GM12878 (cell line): ENCODE measurements at regions of chr10 and their contacts with region 1.

Region 1: DNA sequence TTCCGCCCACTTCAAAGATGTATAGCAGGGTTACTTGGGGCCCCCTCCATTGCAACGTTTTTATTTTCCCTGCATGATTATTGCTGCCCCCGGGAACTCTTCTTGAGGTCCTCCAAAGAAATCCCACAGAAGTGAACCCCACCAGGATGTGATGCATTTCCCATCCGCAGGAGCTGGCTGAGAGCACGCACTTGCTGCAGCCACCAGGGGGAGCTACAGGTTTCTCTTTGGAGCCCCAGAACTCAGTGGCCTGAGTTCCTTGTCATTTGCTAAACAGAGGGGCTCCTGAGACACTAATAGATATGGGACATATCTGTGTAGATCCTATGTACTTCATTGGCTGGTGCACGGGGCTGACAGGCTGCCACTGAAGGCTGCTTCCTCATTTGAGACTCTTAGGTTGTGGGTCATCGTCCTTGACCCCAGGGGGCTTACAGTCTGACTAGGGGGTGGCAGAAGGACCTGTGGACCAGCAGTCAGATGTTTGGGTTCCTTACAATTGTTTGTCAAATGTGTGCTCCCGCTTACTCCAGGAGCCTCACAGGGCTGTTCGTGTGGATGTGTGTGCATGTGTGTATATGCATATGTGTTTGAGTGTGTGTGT is 52.3 kb upstream of the ENO4 start:
- DNase-seq: no peak
- ATAC-seq: peak; percentile 95
- H3K4me3 ChIP-seq: no peak overlapping the region
- H3K27ac ChIP-seq: no peak overlapping the region
- H3K4me1 ChIP-seq: no peaks in the 10 kb centered on the region
- H3K27me3 ChIP-seq: no peaks in the 10 kb centered on the region
- CTCF ChIP-seq: peak; percentile 87 to 93 (median 90)
- EP300 ChIP-seq: no peak
- POLR2A ChIP-seq: no peak
- RAD21 ChIP-seq: peak; percentile 95

Region 2: DNA sequence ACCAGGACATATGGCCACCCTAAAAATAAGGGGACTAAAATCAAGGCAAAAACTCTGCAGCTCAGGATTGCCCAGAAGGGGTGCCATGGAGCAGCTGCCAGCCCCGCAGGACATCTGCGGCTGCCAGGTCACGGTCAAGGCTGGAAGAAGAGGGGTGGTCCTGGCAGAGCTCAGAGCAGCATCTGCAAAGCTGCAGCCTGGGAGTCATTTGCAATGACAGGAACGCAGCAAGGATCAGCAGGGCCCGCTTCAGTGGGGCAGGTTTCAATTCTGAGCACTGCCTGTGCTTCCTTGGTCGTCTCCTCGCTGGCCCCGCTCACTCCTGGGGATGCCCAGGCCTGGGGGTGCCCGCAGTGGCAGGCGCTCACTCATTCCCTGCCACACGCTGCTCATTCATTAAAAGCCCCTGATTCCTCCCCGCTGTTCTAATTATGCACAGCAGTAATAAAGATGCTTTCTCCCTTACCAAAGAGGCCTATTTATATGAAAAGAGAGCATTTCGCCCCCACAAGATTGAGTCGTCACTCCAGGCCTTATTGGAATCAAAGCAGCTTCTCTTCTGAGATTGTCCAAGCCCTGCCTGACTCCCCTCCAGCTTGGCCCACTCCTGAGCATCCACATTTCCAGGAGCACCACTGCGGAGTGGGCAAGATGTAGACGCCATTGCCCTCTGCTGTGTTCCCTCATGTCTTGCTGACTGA is 59.2 kb before region 1 on chr10:
- CTCF ChIA-PET with region 1: no interaction called
- POLR2A ChIA-PET with region 1: no interaction called
- RAD21 ChIA-PET with region 1: no interaction called
- SMC1A ChIA-PET with region 1: no interaction called
- in situ Hi-C with region 1: no loop called
- intact Hi-C with region 1: no loop called
- DNase-seq: no peak
- ATAC-seq: no peak
- H3K4me3 ChIP-seq: no peak overlapping the region
- H3K27ac ChIP-seq: no peak overlapping the region
- H3K4me1 ChIP-seq: no peaks in the 10 kb centered on the region
- H3K27me3 ChIP-seq: peaks cover 2 to 4% of the 10 kb centered on the region in 2 experiments; a peak in 3 of 4 replicates
- CTCF ChIP-seq: peak in 1 of 3 experiments; percentile 6; a peak in 1 of 6 replicates
- EP300 ChIP-seq: no peak
- POLR2A ChIP-seq: no peak
- RAD21 ChIP-seq: no peak

Region 3: GRCh38 chr10:116808706-116809235 is 11.8 kb after region 1 on chr10:
- CTCF ChIA-PET with region 1: interaction called, 18 read pairs
- POLR2A ChIA-PET with region 1: no interaction called
- RAD21 ChIA-PET with region 1: no interaction called
- SMC1A ChIA-PET with region 1: interaction called, 4 read pairs
- in situ Hi-C with region 1: no loop called
- intact Hi-C with region 1: no loop called
- DNase-seq: no peak
- ATAC-seq: no peak
- H3K4me3 ChIP-seq: no peak overlapping the region
- H3K27ac ChIP-seq: no peak overlapping the region
- H3K4me1 ChIP-seq: no peaks in the 10 kb centered on the region
- H3K27me3 ChIP-seq: no peaks in the 10 kb centered on the region; a peak in 2 of 4 replicates
- CTCF ChIP-seq: no peak
- EP300 ChIP-seq: no peak
- POLR2A ChIP-seq: no peak
- RAD21 ChIP-seq: no peak

Region 4: DNA sequence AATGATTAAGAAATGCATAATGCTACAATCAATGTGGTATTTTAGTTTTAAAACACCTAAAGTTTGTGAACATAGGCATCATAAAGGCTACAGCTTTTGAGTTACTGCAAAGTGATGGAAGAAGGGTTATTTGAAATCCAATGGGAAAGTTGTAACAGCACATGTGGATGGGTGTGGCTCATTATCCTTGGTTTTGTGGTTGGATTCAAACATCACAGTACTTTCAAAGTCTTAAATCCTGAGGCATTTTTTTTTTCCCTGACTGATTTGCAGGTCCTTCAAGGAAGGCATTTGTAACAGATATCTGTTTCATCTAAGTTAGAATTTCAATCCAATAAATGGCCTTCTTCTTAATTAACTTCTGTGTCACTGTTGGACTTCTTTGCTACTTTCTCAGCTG is 217.8 kb after region 1 on chr10:
- CTCF ChIA-PET with region 1: no interaction called
- POLR2A ChIA-PET with region 1: no interaction called
- RAD21 ChIA-PET with region 1: no interaction called
- SMC1A ChIA-PET with region 1: no interaction called
- in situ Hi-C with region 1: no loop called
- intact Hi-C with region 1: loop called (anchors 10 kb)
- DNase-seq: no peak
- ATAC-seq: no peak
- H3K4me3 ChIP-seq: no peak overlapping the region
- H3K27ac ChIP-seq: no peak overlapping the region
- H3K4me1 ChIP-seq: no peaks in the 10 kb centered on the region
- H3K27me3 ChIP-seq: no peaks in the 10 kb centered on the region
- CTCF ChIP-seq: no peak
- EP300 ChIP-seq: no peak
- POLR2A ChIP-seq: no peak
- RAD21 ChIP-seq: no peak

Region 5: DNA sequence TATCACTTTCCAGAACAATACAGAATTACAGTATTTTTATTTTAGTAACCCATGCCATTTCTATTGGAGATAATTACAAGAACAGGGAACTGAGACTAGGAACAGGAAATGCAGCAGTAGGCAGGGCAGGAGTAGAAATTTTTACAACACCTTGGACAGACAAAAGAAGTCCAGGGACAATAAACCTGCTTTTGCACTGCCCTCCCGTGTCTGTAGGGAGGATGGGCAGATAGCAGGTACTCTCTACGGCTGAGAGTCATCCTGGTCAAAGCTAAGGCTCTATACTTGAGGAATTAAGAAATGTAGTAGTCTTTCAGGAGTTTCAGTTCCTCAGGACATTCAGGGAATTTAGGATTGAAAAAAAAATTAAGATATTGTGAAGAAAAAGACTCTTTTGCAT is 277.6 kb after region 1 on chr10:
- CTCF ChIA-PET with region 1: interaction called, 3 read pairs
- POLR2A ChIA-PET with region 1: no interaction called
- RAD21 ChIA-PET with region 1: no interaction called
- SMC1A ChIA-PET with region 1: no interaction called
- in situ Hi-C with region 1: no loop called
- intact Hi-C with region 1: loop called (anchors 10 kb)
- DNase-seq: no peak
- ATAC-seq: no peak
- H3K4me3 ChIP-seq: no peak overlapping the region
- H3K27ac ChIP-seq: no peak overlapping the region
- H3K4me1 ChIP-seq: no peaks in the 10 kb centered on the region
- H3K27me3 ChIP-seq: no peaks in the 10 kb centered on the region; a peak in 1 of 4 replicates
- CTCF ChIP-seq: peak in 1 of 3 experiments; percentile 7; a peak in 1 of 6 replicates
- EP300 ChIP-seq: no peak
- POLR2A ChIP-seq: no peak
- RAD21 ChIP-seq: no peak

Region 6: DNA sequence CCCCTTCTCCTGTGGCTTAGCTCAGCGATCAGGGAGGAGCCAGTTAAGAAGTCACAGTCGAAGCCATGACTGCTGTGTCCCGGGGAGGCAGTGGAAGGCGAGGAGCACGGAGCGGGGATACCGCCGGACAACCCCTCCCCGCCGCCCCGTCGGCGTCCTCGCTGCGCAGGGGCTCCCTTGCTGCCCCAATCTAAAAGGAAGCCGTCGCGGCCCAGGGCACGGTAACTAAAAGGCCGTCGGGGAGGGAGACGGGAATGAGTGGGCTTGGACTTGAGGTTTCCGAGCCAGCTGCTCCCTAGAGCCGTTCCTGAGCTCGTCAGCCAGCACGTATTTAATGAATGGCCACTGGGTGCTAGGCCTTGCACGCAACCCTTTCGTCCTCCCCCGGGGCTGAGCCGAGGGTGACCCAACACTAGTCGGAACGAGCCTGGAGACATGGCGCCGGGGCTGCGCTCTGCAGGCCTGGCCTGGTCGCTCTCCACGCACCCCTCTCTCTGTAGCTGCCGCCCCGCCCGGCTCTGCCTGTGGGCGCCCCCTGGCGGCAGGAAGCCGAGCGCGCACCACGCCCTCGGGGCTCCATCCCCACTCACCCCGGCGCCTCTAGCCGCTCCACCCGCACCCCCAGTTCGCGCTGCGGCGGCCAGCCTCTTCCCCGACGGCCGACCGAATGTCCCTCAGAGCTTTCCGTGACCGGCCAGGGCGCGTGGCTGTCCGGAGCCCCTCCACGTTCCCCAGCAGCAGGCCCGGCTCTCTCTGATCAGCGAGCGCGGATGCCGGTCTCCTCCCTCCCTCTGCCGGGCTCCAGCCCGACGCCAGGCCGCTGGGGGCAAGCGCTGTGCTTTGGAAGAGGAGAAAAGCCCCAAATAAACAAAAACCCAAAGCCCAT is 371.0 kb after region 1 on chr10:
- CTCF ChIA-PET with region 1: interaction called, 286 read pairs
- POLR2A ChIA-PET with region 1: interaction called, 4 read pairs
- RAD21 ChIA-PET with region 1: interaction called, 68 read pairs
- SMC1A ChIA-PET with region 1: interaction called, 21 read pairs
- in situ Hi-C with region 1: no loop called
- intact Hi-C with region 1: no loop called
- DNase-seq: no peak
- ATAC-seq: peak; percentile 99
- H3K4me3 ChIP-seq: no peak overlapping the region
- H3K27ac ChIP-seq: no peak overlapping the region
- H3K4me1 ChIP-seq: no peaks in the 10 kb centered on the region
- H3K27me3 ChIP-seq: peaks cover 22 to 25% of the 10 kb centered on the region in 2 experiments
- CTCF ChIP-seq: peak; percentile 63 to 77 (median 66)
- EP300 ChIP-seq: no peak
- POLR2A ChIP-seq: no peak
- RAD21 ChIP-seq: peak; percentile 48